ENCODE measurements at regions of chr1 and their contacts with region 1.

Region 1: GRCh38 chr1:20151906-20152598 is 12.9 kb downstream of the PLA2G2F start:
- DNase-seq: peak; percentile 90
- ATAC-seq: peak; percentile 95

Region 2: GRCh38 chr1:20095564-20096434 is 56.3 kb before region 1 on chr1:
- intact Hi-C with region 1: loop called (anchors 5 kb)
- DNase-seq: no peak
- ATAC-seq: no peak

Region 3: GRCh38 chr1:20233394-20233793 is 81.3 kb after region 1 on chr1:
- intact Hi-C with region 1: no loop called
- DNase-seq: no peak
- ATAC-seq: peak; percentile 59

Region 4: GRCh38 chr1:20348326-20348915 is 196.4 kb after region 1 on chr1:
- intact Hi-C with region 1: no loop called
- DNase-seq: no peak
- ATAC-seq: no peak

Measured in left ventricle myocardium superior (tissue), 1 donor.